SK-N-SH (cell line): ENCODE measurements at regions of chr12 and their contacts with region 1.

Region 1: DNA sequence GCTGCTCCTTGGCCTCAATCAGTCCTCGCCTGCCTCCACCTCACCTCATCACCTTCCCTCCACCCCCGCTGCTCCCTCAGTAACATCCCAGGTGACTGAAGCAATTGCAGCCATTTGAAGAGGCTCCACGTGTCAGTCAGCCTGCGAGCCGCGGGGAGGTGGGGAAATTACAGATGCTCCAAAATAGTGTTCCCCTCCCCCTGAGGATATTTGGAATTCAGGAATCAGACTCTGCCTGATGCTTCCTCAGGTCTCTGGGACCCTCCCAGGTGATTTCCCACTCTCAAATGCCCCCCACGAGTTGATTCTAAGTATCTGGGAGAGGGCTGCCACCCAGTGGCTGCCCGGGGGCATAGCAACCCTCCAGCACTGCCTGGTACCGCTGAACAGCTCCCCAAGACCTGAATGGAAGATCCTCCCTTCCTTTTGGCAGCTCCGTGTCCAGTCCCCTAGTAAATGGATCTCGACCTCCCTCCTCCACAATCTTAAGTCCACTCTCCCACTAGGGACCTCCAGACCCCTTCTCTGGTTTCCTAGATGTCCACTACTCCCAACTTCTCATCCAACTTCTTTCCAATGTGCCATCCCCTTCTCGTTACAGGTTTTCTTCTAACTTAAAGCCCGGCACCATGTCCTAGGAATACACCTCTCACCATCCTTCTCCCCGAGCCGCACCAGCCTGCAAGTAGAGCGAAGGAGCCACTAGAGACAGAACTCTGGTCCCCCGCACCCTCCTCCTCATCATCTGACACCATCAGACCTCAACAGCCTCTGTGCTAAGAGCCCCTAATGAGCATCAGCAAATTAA is 1.4 kb upstream of the ASIC1 start:
- DNase-seq: peak; percentile 86
- H3K4me3 ChIP-seq: no peak overlapping the region; a peak in 1 of 4 replicates
- H3K27ac ChIP-seq: no peak overlapping the region
- H3K4me1 ChIP-seq: peaks cover 7 to 29% of the 10 kb centered on the region in 2 experiments; a peak in 2 of 4 replicates
- H3K27me3 ChIP-seq: peaks cover 7% of the 10 kb centered on the region
- CTCF ChIP-seq: peak; percentile 97
- EP300 ChIP-seq: no peak
- RAD21 ChIP-seq: peak; percentile 88

Region 2: GRCh38 chr12:49872781-49873181 is 183.3 kb before region 1 on chr12:
- CTCF ChIA-PET with region 1: interaction called, 86 read pairs
- POLR2A ChIA-PET with region 1: no interaction called
- DNase-seq: no peak
- H3K4me3 ChIP-seq: no peak overlapping the region
- H3K27ac ChIP-seq: peak overlapping the region in 1 of 2 experiments; percentile 12; a peak in 1 of 4 replicates
- H3K4me1 ChIP-seq: peaks cover 38 to 66% of the 10 kb centered on the region in 2 experiments
- H3K27me3 ChIP-seq: no peaks in the 10 kb centered on the region
- CTCF ChIP-seq: no peak
- EP300 ChIP-seq: no peak
- RAD21 ChIP-seq: no peak

Region 3: GRCh38 chr12:49893753-49894752 is 162.0 kb before region 1 on chr12:
- CTCF ChIA-PET with region 1: no interaction called
- POLR2A ChIA-PET with region 1: no interaction called
- DNase-seq: no peak
- H3K4me3 ChIP-seq: no peak overlapping the region
- H3K27ac ChIP-seq: peak overlapping the region in 1 of 2 experiments; percentile 12; a peak in 1 of 4 replicates
- H3K4me1 ChIP-seq: peaks cover 5 to 17% of the 10 kb centered on the region in 2 experiments; a peak in 1 of 4 replicates
- H3K27me3 ChIP-seq: no peaks in the 10 kb centered on the region
- CTCF ChIP-seq: no peak
- EP300 ChIP-seq: no peak
- RAD21 ChIP-seq: no peak

Region 4: DNA sequence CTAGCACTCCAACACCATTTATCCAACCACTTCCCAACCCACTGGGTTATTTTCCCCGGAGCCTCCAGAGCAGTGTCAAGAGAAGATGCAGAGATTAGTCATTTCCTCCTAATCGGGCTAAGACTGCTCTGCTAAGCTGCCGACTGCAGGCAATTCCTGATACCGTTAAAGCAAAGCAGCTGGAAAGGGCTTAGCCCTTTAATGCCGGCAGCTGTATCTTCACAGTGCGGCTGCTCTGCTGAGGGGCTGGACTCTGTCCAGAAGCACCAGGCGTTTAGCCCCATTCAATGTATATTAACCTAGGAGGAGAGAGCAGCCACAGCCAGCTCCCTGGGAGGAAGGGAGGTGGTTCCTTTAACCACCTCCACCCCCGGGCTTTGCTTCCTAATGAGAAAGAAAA is 72.1 kb before region 1 on chr12:
- CTCF ChIA-PET with region 1: interaction called, 98 read pairs
- POLR2A ChIA-PET with region 1: interaction called, 4 read pairs
- DNase-seq: peak; percentile 62
- H3K4me3 ChIP-seq: no peak overlapping the region
- H3K27ac ChIP-seq: peak overlapping the region; percentile 70 to 99
- H3K4me1 ChIP-seq: peaks cover 20 to 80% of the 10 kb centered on the region in 2 experiments
- H3K27me3 ChIP-seq: no peaks in the 10 kb centered on the region
- CTCF ChIP-seq: no peak
- EP300 ChIP-seq: peak in 1 of 2 experiments; percentile 87; a peak in 2 of 4 replicates
- RAD21 ChIP-seq: peak; percentile 24

Region 5: DNA sequence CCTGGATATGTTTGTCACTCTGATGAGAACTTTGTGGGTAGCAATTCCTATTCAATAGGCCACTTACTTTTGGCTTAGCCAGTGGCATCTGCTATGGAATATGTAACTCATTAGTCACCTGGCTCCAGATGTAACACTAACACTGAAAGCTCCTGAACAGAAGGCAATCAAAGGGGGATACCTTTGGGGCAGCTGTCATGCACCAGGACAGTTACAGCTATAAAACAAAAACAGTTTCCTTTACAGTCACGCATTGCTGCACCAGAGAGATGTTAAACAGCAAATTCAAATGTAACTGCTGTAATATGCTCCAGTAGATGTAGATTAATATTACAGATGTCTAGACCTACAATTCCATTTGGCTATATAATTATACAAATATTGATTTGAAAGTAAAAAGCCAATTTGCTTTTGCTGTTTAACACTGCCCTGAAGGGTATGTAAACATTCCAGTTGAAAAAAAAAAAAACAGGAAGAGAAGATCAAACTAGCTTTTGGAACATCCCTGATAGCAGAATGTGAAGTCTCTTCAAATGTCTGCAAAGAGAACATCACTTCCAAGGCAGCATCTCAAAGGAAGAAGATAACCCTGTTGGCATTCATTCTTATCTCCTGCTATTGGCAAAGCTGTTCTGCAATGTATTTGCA is 49.1 kb before region 1 on chr12:
- CTCF ChIA-PET with region 1: interaction called, 22 read pairs
- POLR2A ChIA-PET with region 1: no interaction called
- DNase-seq: no peak
- H3K4me3 ChIP-seq: no peak overlapping the region
- H3K27ac ChIP-seq: peak overlapping the region; percentile 3 to 87; a peak in 3 of 4 replicates
- H3K4me1 ChIP-seq: peaks cover 6 to 41% of the 10 kb centered on the region in 2 experiments; a peak in 2 of 4 replicates
- H3K27me3 ChIP-seq: no peaks in the 10 kb centered on the region
- CTCF ChIP-seq: no peak
- EP300 ChIP-seq: peak in 1 of 2 experiments; percentile 80; a peak in 2 of 4 replicates
- RAD21 ChIP-seq: no peak

Region 6: GRCh38 chr12:50025187-50026059 is 30.6 kb before region 1 on chr12 and contains the start of gene RACGAP1:
- CTCF ChIA-PET with region 1: interaction called, 17 read pairs
- POLR2A ChIA-PET with region 1: interaction called, 3 read pairs
- DNase-seq: peak; percentile 96
- H3K4me3 ChIP-seq: peak within 1 kb of the TSS; percentile 67 to 73
- H3K27ac ChIP-seq: peak within 1 kb of the TSS; percentile 40 to 86; a peak in 3 of 4 replicates
- H3K4me1 ChIP-seq: peaks cover 0 to 2% of the 10 kb centered on the region in 2 experiments; a peak in 3 of 4 replicates
- H3K27me3 ChIP-seq: no peaks in the 10 kb centered on the region
- CTCF ChIP-seq: no peak
- EP300 ChIP-seq: peak in 1 of 2 experiments; percentile 47; a peak in 1 of 4 replicates
- RAD21 ChIP-seq: no peak; the same call in 1 of the 2 replicates
- polyA plus RNA-seq, gene RACGAP1: 21.5 and 23.4 TPM in 2 replicates

Region 7: DNA sequence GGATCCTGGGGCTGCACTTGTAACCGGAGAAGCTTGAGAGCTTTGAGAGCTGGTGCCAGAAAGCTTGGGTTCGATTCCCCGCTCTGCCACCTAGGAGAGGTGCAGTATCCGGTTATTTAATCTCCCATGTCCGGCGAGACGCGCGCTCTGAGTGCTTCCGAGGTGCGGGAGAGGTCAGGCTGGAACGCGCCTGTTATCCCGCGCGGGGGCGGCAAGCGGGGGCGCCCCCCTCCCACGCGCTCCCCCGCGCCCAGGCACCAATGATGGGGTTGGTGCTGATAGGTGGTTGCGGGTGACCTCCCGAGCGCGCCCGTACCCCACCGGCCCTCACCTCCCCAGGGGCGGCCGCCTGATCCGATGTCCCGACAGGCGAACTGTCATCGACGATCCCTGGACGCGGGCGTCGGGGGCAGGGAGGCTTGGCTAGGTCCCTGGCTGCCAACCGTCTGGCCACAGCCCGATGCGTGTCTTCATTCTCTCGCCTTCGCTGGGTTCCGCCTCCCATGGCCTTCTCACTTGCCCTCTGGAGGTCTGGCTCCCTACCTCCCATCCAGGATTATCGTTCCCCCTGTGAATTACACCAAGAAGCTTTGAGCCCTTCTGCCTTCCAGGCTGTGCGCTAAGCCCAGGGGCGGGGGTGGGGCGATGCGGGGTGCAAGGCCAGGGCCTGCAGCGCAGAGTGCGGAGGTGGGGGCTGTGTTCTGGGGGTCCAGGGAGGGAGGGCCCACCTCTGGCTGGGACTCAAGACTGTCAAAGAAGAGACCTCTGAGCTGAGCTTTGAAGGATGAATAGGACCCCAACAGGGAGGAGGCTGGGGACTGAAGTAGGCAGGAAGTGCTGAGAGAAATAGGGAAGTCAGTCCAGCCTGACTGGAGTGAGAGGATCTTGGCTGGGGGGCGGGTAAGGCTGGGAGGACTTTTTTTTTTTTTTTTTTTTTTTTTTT is 23.1 kb before region 1 on chr12:
- CTCF ChIA-PET with region 1: interaction called, 105 read pairs
- POLR2A ChIA-PET with region 1: no interaction called
- DNase-seq: peak; percentile 39
- H3K4me3 ChIP-seq: no peak overlapping the region
- H3K27ac ChIP-seq: no peak overlapping the region
- H3K4me1 ChIP-seq: no peaks in the 10 kb centered on the region
- H3K27me3 ChIP-seq: no peaks in the 10 kb centered on the region
- CTCF ChIP-seq: no peak
- EP300 ChIP-seq: no peak
- RAD21 ChIP-seq: no peak